Heart left ventricle (tissue), 16 donors: ENCODE measurements at regions of chr20 and their contacts with region 1.

Region 1: DNA sequence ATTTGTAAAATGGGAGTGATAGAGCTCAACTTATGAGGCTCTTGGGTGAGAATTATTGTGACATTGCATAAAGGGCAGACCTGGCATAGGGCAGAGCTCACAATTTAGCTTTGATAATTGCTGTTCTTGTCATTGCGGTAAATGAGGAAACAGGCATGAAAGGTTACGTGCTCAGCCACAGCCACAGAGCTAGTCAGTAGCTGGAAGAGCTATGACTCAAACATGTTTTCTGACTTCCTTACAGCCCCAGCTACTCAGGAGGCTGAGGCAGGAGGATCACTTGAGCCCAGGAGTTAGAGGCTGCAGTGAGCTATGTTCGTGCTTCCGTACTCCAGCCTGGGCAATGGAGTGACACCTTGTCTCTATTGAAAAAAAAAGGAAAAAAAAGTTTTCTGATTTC is 3.5 kb upstream of the GHRH start:
- DNase-seq: no peak
- ATAC-seq: no peak
- H3K4me3 ChIP-seq: no peak overlapping the region
- H3K27ac ChIP-seq: no peak overlapping the region
- H3K4me1 ChIP-seq: peaks cover 0 to 4% (median 0%) of the 10 kb centered on the region in 12 donors
- H3K27me3 ChIP-seq: peaks cover 0 to 23% (median 3%) of the 10 kb centered on the region in 9 donors
- CTCF ChIP-seq: no peak
- POLR2A ChIP-seq: no peak

Region 2: GRCh38 chr20:37202267-37202943 is 62.7 kb before region 1 on chr20:
- intact Hi-C with region 1: loop called in 1 of 10 experiments (anchors 2 kb)
- DNase-seq: no peak
- ATAC-seq: peak in 3 of 4 donors; percentile 40 to 81 (median 62)
- H3K4me3 ChIP-seq: no peak overlapping the region
- H3K27ac ChIP-seq: peak overlapping the region in 4 of 12 donors; percentile 5 to 44 (median 30)
- H3K4me1 ChIP-seq: peaks cover 0 to 12% (median 0%) of the 10 kb centered on the region in 12 donors
- H3K27me3 ChIP-seq: no peaks in the 10 kb centered on the region
- CTCF ChIP-seq: peak; percentile 61 to 84 (median 73)
- POLR2A ChIP-seq: no peak

Region 3: DNA sequence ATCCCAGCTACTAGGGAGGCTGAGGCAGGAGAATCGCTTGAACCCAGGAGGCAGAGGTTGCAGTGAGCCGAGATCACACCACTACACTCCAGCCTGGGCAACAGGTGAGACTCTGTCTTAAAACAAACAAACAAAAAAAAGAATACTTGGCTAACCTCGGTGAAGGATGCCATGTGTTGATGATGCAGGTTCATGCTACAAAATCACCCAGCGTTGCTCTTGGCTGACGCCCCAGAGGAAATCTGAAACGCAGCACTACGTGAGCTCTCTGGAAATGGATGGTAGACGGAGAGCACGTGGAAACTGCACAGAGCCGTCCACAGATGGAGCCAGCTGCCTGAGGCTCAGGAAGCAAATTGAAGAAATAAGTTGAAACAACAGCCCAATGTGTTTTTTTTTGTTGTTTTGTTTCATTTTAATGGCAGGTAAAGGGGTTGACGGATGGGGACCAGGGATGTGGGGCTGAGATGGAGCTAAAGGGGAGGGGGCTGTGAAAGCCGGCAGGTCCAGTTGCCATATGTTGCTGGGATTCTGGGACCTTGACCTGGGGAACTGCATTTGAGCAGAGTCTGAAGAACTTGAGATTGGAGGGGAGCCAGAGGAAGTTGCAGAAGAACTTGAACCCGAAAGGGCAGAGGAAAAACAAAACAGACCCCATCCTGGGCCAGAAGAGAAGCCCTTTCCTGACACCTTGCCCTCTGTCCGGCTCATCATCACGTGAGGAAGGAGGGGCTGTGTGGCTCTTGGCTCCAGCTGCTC is 11.5 kb after region 1 on chr20:
- intact Hi-C with region 1: no loop called
- DNase-seq: peak in 4 of 5 donors; percentile 39 to 61 (median 56)
- ATAC-seq: peak; percentile 77 to 95 (median 90)
- H3K4me3 ChIP-seq: peak overlapping the region in 3 of 12 donors; percentile 9 to 26 (median 10)
- H3K27ac ChIP-seq: peak overlapping the region in 3 of 12 donors; percentile 14 to 76 (median 57)
- H3K4me1 ChIP-seq: peaks cover 0 to 37% (median 9%) of the 10 kb centered on the region in 12 donors
- H3K27me3 ChIP-seq: peaks cover 0 to 5% (median 0%) of the 10 kb centered on the region in 9 donors
- CTCF ChIP-seq: peak in 9 of 12 donors; percentile 20 to 55 (median 33)
- POLR2A ChIP-seq: no peak